Lower leg skin (tissue), 4 donors: ENCODE measurements at regions of chr7 and their contacts with region 1.

Region 1: GRCh38 chr7:7103343-7104313 is 78.7 kb upstream of the C1GALT1 start:
- DNase-seq: no peak
- H3K4me3 ChIP-seq: no peak overlapping the region
- CTCF ChIP-seq: no peak
- POLR2A ChIP-seq: no peak

Region 2: DNA sequence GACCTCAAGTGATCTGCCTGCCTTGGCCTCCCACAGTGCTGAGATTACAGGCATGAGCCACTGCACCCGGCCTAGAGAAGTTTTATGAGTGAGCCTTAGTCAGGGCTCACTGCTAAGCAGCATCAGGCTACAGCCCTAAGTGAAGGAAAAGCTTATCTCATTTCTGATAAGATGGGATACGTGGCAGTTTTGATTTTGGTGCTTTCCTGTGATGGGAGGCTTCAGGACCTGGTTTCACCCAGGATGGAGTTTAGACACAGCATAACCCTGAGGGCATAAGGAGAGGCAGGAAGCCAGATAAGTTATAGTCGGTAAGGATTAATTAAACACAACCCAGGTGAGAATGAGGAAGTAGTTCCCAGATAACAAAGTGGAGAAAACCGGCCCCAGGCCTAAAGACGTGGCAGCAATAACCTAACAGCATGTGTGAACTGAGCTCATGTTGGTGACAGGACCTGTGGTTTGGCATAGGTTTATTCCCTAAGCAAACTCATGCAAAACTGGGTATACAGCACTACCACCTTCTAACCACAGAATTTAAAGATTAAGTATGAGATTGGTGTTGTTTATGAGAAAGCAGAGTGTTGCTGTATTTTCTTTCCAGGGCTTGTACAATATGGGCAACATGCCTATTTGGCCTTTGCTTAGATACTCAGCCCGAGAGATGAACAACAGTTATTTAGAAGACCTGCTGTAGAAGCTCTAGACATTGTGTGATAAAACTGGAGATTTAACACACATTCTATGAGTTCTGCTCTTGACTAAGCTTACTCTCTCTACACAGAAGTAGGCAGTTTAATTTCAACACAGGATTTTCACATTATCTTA is 312.6 kb after region 1 on chr7:
- intact Hi-C with region 1: loop called (anchors 10 kb)
- DNase-seq: peak in 1 of 2 donors; percentile 25
- H3K4me3 ChIP-seq: no peak overlapping the region
- CTCF ChIP-seq: no peak
- POLR2A ChIP-seq: no peak

Region 3: DNA sequence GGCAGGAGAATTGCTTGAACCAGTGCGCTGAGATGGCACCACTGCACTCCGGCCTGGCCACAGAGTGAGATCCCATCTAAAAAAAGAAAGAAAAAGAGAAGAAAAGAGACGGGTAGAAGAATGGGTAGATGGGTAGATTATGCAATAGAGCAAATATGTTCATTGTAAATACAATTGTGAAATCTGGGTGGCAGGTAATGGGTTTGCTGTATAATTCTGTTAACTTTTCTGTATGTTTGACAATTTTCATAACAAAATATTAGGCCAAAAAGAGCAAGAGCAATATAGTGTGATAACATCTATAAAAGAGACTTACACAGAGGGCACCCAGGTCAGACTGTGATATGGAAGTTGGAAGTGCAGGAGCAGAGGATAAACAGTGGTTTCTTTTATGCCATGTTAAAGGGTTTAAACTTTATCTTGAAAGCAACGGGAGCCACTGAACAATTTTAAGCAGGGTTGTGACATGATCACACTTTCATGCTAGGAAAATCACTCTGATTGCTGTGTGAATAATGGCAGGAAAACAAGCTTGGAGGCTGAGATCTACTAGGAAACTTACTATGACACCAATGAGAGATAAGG is 438.7 kb after region 1 on chr7:
- intact Hi-C with region 1: loop called (anchors 5 kb)
- DNase-seq: no peak
- H3K4me3 ChIP-seq: no peak overlapping the region
- CTCF ChIP-seq: no peak
- POLR2A ChIP-seq: no peak